B cell (primary cell): ENCODE measurements at regions of chr19 and their contacts with region 1.

Region 1: DNA sequence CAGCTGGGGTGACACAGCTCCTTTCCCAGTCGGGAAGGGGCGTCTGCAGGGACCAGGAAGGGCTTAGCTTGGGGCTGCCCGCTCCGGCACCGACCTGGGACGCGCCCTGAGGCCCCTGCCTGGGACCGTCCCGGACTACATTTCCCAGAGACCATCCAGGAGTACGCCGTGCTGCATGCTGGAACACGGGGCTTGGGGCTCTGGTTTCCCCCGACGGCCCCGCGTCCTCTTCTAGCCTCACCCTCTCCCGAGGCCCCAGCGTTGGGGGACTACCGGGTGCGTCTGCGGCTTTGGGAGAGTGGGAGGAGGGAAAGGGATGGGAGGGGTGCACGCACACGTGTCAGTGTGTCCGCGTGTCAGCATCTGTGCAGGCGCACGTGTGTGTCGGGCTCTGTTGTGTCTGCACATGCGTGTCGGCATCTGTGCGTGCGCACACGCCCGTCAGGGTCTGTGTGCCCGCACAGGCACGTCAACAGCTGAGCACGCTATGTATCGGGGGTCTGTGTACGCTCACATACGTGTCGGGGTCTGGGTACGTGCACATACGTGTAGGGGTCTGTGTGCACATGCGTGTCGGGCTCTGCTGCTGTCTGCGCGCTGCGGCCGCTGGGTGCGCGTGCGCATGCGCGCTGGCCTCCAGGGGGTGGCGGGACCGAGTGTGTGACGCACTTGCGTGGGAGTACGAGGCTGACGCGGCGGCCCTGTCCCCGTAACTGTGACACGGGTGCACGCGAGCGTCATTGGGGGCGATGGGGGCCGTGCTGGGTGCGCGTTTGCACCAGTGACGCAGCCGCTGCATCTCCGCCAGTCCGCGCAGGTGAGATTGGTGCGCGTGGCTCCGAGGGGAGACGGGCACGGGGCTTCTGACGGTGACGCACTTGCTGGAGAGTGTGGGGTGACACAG is at the start of gene ZNF331:
- DNase-seq: peak; percentile 96
- ATAC-seq: peak; percentile 76
- H3K4me3 ChIP-seq: peak within 1 kb of the TSS in 4 of 5 experiments; percentile 60 to 73 (median 68)
- H3K4me3 Mint-ChIP-seq: peak within 1 kb of the TSS; percentile 98
- H3K27ac ChIP-seq: peak within 1 kb of the TSS; percentile 92 to 97
- H3K27ac Mint-ChIP-seq: peak within 1 kb of the TSS; percentile 99
- H3K4me1 ChIP-seq: peaks cover 0 to 15% of the 10 kb centered on the region in 2 donors
- H3K4me1 Mint-ChIP-seq: peaks cover 25% of the 10 kb centered on the region
- H3K27me3 ChIP-seq: no peaks in the 10 kb centered on the region
- H3K27me3 Mint-ChIP-seq: no peaks in the 10 kb centered on the region
- CTCF ChIP-seq: no peak
- total RNA-seq, gene ZNF331: 60.1 and 68.2 TPM in 2 replicates

Region 2: DNA sequence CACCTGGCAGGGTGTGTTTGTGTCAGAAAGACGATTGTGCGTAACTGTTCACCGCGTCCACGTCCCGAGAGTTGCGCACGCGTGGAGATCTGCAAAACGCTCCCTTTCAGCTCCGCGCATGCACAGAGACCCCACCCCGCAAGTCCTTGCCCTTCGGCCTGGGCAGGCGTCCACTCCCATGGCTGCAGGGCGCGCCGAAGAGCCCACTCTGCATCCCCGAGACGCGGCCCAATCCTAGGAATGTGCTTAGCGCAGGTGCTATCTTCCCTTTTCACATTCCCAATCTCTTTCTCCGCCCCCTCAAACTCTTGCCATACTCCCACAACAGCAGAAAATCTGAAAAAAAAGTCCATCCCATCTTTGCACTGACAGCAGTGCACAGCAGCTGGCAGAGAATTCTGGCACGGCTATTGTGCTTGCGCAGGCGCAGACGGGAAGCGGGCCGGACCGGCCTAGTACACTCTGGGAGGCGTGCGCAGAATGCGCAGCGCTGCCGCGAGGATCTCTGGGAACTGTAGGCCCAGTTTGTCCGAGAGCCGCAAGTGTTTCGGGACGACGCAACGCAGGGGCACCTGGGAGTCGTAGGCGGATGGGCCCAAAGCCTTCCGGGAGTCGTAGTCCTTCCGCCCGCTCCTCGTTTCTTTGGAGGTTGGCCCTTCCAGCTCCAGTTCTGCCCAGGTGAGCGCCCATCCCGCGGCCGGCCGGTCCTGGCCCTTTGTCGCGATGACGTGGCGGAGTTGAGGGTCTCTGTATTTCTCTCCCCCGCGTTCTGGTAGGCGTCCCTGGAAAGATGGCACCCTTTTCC is 1943.6 kb before region 1 on chr19:
- CTCF ChIA-PET with region 1: no interaction called
- POLR2A ChIA-PET with region 1: no interaction called
- intact Hi-C with region 1: loop called (anchors 5 kb)
- DNase-seq: peak; percentile 97
- ATAC-seq: peak; percentile 100
- H3K4me3 ChIP-seq: peak overlapping the region; percentile 53 to 92 (median 88)
- H3K4me3 Mint-ChIP-seq: peak overlapping the region; percentile 92
- H3K27ac ChIP-seq: peak overlapping the region; percentile 19 to 55
- H3K27ac Mint-ChIP-seq: peak overlapping the region; percentile 84
- H3K4me1 ChIP-seq: peaks cover 16 to 21% of the 10 kb centered on the region in 2 donors
- H3K4me1 Mint-ChIP-seq: peaks cover 25% of the 10 kb centered on the region
- H3K27me3 ChIP-seq: no peaks in the 10 kb centered on the region
- H3K27me3 Mint-ChIP-seq: no peaks in the 10 kb centered on the region
- CTCF ChIP-seq: no peak

Region 3: DNA sequence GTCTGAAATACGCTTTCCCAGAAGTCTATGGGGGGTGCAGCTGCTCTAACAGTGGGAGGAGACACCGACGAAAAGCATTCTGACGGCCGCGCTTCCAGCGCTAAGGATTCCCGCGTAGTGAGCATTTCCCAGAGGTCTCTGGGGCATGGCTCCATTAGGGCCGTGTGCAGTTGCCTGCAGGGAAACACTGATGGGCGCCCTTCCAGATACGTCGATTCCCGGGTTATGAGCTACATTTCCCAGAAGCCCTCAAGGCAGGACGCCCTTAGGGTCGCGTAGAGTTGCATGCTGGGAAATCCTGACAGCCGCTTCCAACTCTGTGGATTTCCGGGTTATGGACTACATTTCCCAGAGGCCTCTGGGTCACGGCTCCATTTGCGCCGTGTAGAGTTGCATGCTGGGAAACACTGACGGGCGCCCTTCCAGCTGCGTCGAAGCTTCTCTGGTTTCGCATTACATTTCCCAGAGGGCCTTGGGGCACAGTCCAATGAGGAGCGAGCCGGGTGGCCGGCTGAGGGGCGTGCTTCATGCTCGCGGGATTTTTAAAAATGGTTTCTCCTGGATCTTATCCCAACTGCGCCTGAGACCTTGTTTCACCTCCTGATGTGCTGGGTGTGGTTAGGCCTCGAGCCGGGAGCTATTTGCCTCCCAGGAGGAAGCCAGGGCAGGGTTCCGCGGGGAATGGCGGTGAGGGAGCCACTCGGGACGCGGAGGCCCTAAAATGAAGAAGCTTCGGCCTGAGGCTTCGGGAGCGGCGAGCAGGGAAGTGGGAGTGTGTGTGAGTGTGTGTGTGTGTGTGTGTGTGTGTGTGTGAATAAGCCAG is 17.0 kb before region 1 on chr19:
- CTCF ChIA-PET with region 1: interaction called, 3 read pairs
- POLR2A ChIA-PET with region 1: no interaction called
- intact Hi-C with region 1: loop called (anchors 1 kb)
- DNase-seq: peak; percentile 96
- ATAC-seq: peak; percentile 97
- H3K4me3 ChIP-seq: peak overlapping the region; percentile 59 to 96 (median 81)
- H3K4me3 Mint-ChIP-seq: peak overlapping the region; percentile 96
- H3K27ac ChIP-seq: peak overlapping the region; percentile 66 to 89
- H3K27ac Mint-ChIP-seq: peak overlapping the region; percentile 95
- H3K4me1 ChIP-seq: peaks cover 7 to 15% of the 10 kb centered on the region in 2 donors
- H3K4me1 Mint-ChIP-seq: peaks cover 16% of the 10 kb centered on the region
- H3K27me3 ChIP-seq: no peaks in the 10 kb centered on the region
- H3K27me3 Mint-ChIP-seq: no peaks in the 10 kb centered on the region
- CTCF ChIP-seq: no peak

Region 4: DNA sequence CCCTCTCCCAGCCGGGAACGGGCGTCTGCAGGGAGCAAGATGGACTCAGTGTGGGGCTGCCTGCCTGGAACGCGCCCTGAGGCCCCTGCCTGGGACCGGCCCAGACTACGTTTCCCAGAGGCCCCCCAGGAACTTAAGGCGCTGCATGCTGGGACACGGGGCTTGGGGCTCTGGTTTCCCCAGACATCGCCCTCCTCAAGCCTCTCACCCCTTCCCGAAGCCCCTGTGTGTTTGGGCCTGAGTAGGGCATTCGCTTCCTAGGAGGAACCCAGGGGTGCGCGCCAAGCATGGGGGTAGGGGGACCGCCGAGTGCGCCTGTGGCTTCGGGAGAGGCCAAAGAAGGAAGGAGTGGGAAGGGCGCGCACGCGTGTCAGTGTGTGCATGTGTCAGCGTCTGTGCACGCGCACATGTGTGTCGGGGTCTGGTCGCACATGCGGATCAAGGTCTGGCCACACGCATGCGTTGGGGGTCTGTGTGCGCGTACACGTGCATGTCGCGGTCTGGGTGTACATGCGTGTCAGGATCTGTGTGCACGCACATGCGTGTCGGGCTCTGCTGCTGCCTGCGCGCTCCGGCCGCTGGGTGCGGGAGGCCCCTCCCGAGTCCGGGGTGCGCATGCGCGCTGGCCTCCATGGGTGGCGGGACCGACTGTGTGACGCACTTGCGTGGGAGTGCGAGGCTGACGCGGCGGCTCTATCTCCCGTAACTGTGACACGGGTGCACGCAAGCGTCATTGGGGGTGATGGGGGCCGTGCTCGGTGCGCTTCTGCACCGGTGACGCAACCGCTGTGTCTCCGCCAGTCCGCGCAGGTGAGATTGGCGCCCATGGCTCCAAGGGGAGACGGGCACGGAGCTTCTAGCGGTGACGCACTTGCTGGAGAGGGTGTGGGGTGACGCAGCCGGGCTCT is 16.4 kb after region 1 on chr19:
- CTCF ChIA-PET with region 1: no interaction called
- POLR2A ChIA-PET with region 1: no interaction called
- intact Hi-C with region 1: loop called (anchors 1 kb)
- DNase-seq: peak; percentile 96
- ATAC-seq: peak; percentile 81
- H3K4me3 ChIP-seq: peak overlapping the region in 4 of 5 experiments; percentile 66 to 77 (median 69)
- H3K4me3 Mint-ChIP-seq: peak overlapping the region; percentile 92
- H3K27ac ChIP-seq: peak overlapping the region; percentile 95 to 97
- H3K27ac Mint-ChIP-seq: peak overlapping the region; percentile 92
- H3K4me1 ChIP-seq: peaks cover 4 to 18% of the 10 kb centered on the region in 2 donors
- H3K4me1 Mint-ChIP-seq: peaks cover 28% of the 10 kb centered on the region
- H3K27me3 ChIP-seq: no peaks in the 10 kb centered on the region
- H3K27me3 Mint-ChIP-seq: no peaks in the 10 kb centered on the region
- CTCF ChIP-seq: no peak